ENCODE measurements at regions of chr6 and their contacts with region 1.

Region 1: DNA sequence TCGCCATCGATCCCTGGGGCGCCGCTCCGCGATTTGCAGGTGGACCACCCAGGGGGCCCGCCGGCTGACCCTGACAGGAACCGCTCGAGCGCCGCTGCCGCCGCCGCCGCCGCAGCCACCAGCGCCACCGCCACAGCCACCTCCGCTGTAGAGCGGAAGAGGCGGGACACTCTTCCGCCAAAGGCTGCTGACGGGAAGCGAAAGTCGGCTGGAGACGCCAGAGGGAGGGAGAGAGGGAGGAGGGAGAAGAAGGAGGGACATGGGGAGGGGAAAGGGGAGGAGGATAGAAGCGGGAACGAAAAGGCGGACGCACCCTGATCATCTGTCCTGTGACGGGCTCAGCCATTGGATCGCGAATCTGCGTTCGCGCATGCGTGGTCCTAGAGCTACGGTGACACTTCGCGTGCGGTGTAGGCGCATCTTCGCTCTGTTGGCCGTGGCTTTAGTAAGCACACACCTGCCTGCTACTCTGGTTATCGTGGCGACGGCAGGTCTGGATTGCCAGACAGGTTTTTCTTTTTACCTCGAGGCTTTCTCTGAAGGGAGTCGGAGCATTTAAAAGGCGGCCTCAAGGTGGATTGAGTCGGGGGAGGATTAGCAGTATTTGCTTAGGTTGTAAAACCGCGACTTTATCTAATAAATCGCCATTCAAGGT is at the start of gene TMEM30A:
- DNase-seq: peak; percentile 98
- ATAC-seq: peak; percentile 100
- H3K4me3 ChIP-seq: peak within 1 kb of the TSS; percentile 83 to 94
- H3K27ac ChIP-seq: peak within 1 kb of the TSS in 1 of 2 donors; percentile 87
- H3K4me1 ChIP-seq: peaks cover 0 to 2% of the 10 kb centered on the region in 2 donors
- H3K27me3 ChIP-seq: no peaks in the 10 kb centered on the region
- total RNA-seq, gene TMEM30A: 133 to 164 TPM

Region 2: GRCh38 chr6:74689601-74690000 is 595.2 kb before region 1 on chr6:
- intact Hi-C with region 1: no loop called
- DNase-seq: no peak
- ATAC-seq: no peak
- H3K4me3 ChIP-seq: no peak overlapping the region
- H3K27ac ChIP-seq: no peak overlapping the region
- H3K4me1 ChIP-seq: no peaks in the 10 kb centered on the region
- H3K27me3 ChIP-seq: no peaks in the 10 kb centered on the region

Region 3: DNA sequence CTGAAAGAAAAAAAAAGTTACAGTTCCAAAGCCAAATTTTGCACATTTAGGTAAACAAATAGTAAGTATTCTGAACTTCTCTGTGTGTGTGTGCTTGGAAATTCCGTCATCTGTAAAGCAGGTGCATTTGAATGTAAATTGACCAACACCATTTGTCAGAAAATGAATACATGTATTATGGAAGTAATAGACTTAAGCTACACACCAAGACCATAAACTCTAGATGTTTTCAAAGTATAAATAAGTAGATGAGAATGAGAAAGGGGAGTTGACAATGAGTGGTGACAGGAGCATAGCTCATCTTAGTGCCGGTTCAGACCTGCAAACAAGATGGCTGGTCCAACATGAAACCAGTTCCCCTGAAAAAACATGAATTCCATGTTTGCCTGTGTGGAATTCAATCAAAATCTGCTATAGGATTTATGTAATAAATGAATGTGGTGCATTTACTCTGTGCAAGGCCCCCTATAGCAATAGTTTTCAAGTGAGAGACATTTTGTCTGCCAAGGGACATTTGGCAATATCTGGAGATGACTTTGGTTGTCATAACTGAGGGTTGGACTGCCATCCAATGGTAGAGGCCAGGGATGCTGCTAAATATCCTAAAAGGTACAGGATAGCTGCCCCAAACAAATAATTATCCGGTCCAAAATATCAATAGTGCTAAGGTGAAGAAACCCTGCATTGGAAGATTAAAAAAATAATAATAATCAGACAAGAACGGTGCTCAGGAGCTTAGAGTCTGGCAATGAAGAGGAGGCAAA is 219.9 kb after region 1 on chr6:
- intact Hi-C with region 1: loop called in 1 of 2 experiments (anchors 5 kb)
- DNase-seq: no peak
- ATAC-seq: peak; percentile 85
- H3K4me3 ChIP-seq: no peak overlapping the region
- H3K27ac ChIP-seq: no peak overlapping the region
- H3K4me1 ChIP-seq: no peaks in the 10 kb centered on the region
- H3K27me3 ChIP-seq: no peaks in the 10 kb centered on the region

Measured in aorta (tissue), 5 donors.